A549 (cell line): ENCODE measurements at regions of chr2 and their contacts with region 1.

Region 1: GRCh38 chr2:112884869-112885505 is 26.0 kb upstream of the IL37 start:
- DNase-seq: peak; percentile 40 to 41
- ATAC-seq: peak; percentile 64 to 86; a peak in 4 of 6 replicates
- H3K4me3 ChIP-seq: no peak overlapping the region
- H3K27ac ChIP-seq: no peak overlapping the region
- H3K4me1 ChIP-seq: no peaks in the 10 kb centered on the region
- CTCF ChIP-seq: peak; percentile 61
- EP300 ChIP-seq: no peak
- POLR2A ChIP-seq: no peak
- RAD21 ChIP-seq: peak; percentile 69 to 78

Region 2: GRCh38 chr2:112906276-112906675 is 21.3 kb after region 1 on chr2:
- CTCF ChIA-PET with region 1: interaction called, 13 read pairs
- POLR2A ChIA-PET with region 1: no interaction called
- DNase-seq: no peak
- ATAC-seq: no peak
- H3K4me3 ChIP-seq: no peak overlapping the region
- H3K27ac ChIP-seq: no peak overlapping the region
- H3K4me1 ChIP-seq: no peaks in the 10 kb centered on the region
- CTCF ChIP-seq: no peak
- EP300 ChIP-seq: no peak
- POLR2A ChIP-seq: no peak
- RAD21 ChIP-seq: no peak

Region 3: GRCh38 chr2:113291191-113291590 is 406.2 kb after region 1 on chr2:
- CTCF ChIA-PET with region 1: no interaction called
- POLR2A ChIA-PET with region 1: no interaction called
- DNase-seq: no peak
- ATAC-seq: no peak
- H3K4me3 ChIP-seq: no peak overlapping the region
- H3K27ac ChIP-seq: peak overlapping the region in 1 of 2 experiments; percentile 66; a peak in 3 of 6 replicates
- H3K4me1 ChIP-seq: peaks cover 18% of the 10 kb centered on the region
- CTCF ChIP-seq: no peak
- EP300 ChIP-seq: no peak
- POLR2A ChIP-seq: no peak
- RAD21 ChIP-seq: no peak